Tibial artery (tissue), 4 donors: ENCODE measurements at regions of chr3 and their contacts with region 1.

Region 1: GRCh38 chr3:52406231-52406661 is 38.7 kb downstream of the SEMA3G start:
- DNase-seq: peak in 1 of 2 donors; percentile 66
- H3K4me3 ChIP-seq: no peak overlapping the region
- H3K27ac ChIP-seq: no peak overlapping the region
- H3K4me1 ChIP-seq: peaks cover 0 to 30% (median 20%) of the 10 kb centered on the region in 4 donors
- H3K27me3 ChIP-seq: no peaks in the 10 kb centered on the region
- CTCF ChIP-seq: no peak

Region 2: GRCh38 chr3:52291508-52292181 is 114.6 kb before region 1 on chr3:
- intact Hi-C with region 1: loop called (anchors 5 kb)
- DNase-seq: no peak
- H3K4me3 ChIP-seq: no peak overlapping the region
- H3K27ac ChIP-seq: no peak overlapping the region
- H3K4me1 ChIP-seq: peaks cover 0 to 18% (median 9%) of the 10 kb centered on the region in 4 donors
- H3K27me3 ChIP-seq: no peaks in the 10 kb centered on the region
- CTCF ChIP-seq: peak; percentile 4 to 27

Region 3: DNA sequence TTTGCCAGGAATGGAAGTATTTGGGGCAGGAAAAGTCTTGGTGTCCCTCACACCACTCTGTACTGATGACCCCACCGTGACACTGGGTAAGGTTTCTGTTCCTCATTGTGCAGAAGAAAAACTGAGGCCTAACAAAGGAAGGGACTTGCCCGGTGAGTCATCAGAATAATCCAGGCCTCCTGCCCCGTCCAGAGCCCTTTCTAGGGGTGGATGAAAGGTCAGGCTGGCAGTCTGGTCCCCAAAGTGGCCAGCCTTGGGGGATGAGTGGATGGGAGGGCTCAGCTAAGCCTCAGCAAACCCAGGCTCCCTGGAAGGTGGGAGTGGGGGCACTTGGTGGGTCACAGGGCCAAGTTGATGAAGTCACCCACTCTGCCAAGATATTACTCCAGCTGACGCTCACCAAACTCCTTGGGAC is 92.5 kb before region 1 on chr3:
- intact Hi-C with region 1: no loop called
- DNase-seq: peak in 1 of 2 donors; percentile 44
- H3K4me3 ChIP-seq: no peak overlapping the region
- H3K27ac ChIP-seq: no peak overlapping the region
- H3K4me1 ChIP-seq: peaks cover 0 to 11% (median 5%) of the 10 kb centered on the region in 4 donors
- H3K27me3 ChIP-seq: no peaks in the 10 kb centered on the region
- CTCF ChIP-seq: no peak